CD4-positive, alpha-beta T cell (primary cell): ENCODE measurements at regions of chr7 and their contacts with region 1.

Region 1: DNA sequence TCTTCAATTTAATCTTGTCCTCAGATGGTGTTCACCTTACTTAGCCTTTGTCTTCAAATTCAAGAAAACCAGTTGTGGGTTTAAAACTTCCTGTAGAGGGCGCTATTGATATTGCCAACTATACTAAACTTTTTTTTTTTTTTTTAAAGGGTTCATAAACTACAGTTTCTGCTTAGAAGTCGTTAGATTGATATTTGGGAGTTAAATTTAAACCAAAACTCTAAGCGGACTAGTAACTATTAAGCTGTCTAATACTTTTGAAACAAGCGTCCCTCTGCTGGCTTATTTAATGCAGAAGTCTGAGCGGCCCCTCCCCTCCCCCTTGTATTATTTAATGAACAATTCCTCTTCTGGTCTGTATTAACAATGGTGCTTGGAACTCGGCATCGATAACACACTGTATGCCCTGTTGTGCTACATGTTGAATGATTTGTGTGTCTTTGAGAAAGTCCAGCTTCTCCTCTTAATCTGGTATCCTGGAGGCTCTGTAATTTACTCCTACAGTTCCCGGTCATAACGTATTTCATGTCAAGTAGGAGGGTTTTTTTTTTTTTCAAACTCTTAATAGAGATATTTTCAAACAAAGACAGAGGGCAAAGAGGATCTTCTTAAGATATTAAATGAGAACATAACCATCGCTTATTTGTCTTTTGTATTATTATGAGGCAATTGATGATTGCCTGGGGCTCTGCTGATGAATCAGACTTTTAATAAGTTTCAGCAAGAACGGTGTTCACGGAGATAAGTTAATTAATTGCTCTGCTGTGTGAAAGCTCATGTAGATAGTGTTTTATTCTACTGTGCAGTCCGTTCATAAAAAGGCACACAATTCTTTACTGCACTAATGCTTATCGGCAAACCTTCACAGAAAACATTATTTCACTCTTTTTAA is 22.6 kb upstream of the CREB5 start:
- DNase-seq: peak in 3 of 14 experiments; percentile 35 to 50 (median 42)
- ATAC-seq: no peak
- H3K4me3 ChIP-seq: no peak overlapping the region
- H3K4me3 Mint-ChIP-seq: no peak overlapping the region
- H3K27ac ChIP-seq: no peak overlapping the region
- H3K27ac Mint-ChIP-seq: no peak overlapping the region
- H3K4me1 ChIP-seq: no peaks in the 10 kb centered on the region
- H3K4me1 Mint-ChIP-seq: no peaks in the 10 kb centered on the region
- H3K27me3 ChIP-seq: peaks cover 3 to 21% of the 10 kb centered on the region in 2 experiments
- H3K27me3 Mint-ChIP-seq: peaks cover 58% of the 10 kb centered on the region
- CTCF ChIP-seq: peak; percentile 62

Region 2: GRCh38 chr7:28608731-28609130 is 219.0 kb after region 1 on chr7:
- CTCF ChIA-PET with region 1: no interaction called
- POLR2A ChIA-PET with region 1: no interaction called
- intact Hi-C with region 1: no loop called
- DNase-seq: no peak
- ATAC-seq: no peak
- H3K4me3 ChIP-seq: no peak overlapping the region
- H3K4me3 Mint-ChIP-seq: no peak overlapping the region
- H3K27ac ChIP-seq: no peak overlapping the region
- H3K27ac Mint-ChIP-seq: no peak overlapping the region
- H3K4me1 ChIP-seq: no peaks in the 10 kb centered on the region
- H3K4me1 Mint-ChIP-seq: no peaks in the 10 kb centered on the region
- H3K27me3 ChIP-seq: no peaks in the 10 kb centered on the region
- H3K27me3 Mint-ChIP-seq: peaks cover 5% of the 10 kb centered on the region
- CTCF ChIP-seq: no peak

Region 3: GRCh38 chr7:28853834-28854749 is 464.3 kb after region 1 on chr7:
- CTCF ChIA-PET with region 1: no interaction called
- POLR2A ChIA-PET with region 1: no interaction called
- intact Hi-C with region 1: loop called (anchors 2 to 5 kb)
- DNase-seq: peak; percentile 23 to 71 (median 46)
- ATAC-seq: peak; percentile 88
- H3K4me3 ChIP-seq: peak overlapping the region; percentile 47
- H3K4me3 Mint-ChIP-seq: peak overlapping the region; percentile 68
- H3K27ac ChIP-seq: no peak overlapping the region
- H3K27ac Mint-ChIP-seq: no peak overlapping the region
- H3K4me1 ChIP-seq: peaks cover 10% of the 10 kb centered on the region
- H3K4me1 Mint-ChIP-seq: peaks cover 5% of the 10 kb centered on the region
- H3K27me3 ChIP-seq: peaks cover 24 to 44% of the 10 kb centered on the region in 2 experiments
- H3K27me3 Mint-ChIP-seq: peaks cover 82% of the 10 kb centered on the region
- CTCF ChIP-seq: peak; percentile 71